Mammary epithelial cell (primary cell): ENCODE measurements at regions of chr3 and their contacts with region 1.

Region 1: GRCh38 chr3:15498431-15499214 is 22.9 kb downstream of the COLQ start:
- DNase-seq: no peak
- H3K4me3 ChIP-seq: no peak overlapping the region
- H3K27ac ChIP-seq: no peak overlapping the region
- H3K4me1 ChIP-seq: no peaks in the 10 kb centered on the region
- H3K27me3 ChIP-seq: no peaks in the 10 kb centered on the region
- CTCF ChIP-seq: no peak

Region 2: GRCh38 chr3:15268033-15268631 is 230.5 kb before region 1 on chr3:
- CTCF ChIA-PET with region 1: no interaction called
- dilution Hi-C with region 1: no loop called
- in situ Hi-C with region 1: no loop called
- intact Hi-C with region 1: no loop called
- DNase-seq: peak; percentile 60
- H3K4me3 ChIP-seq: no peak overlapping the region
- H3K27ac ChIP-seq: no peak overlapping the region
- H3K4me1 ChIP-seq: peaks cover 20% of the 10 kb centered on the region
- H3K27me3 ChIP-seq: no peaks in the 10 kb centered on the region
- CTCF ChIP-seq: peak; percentile 94 to 97

Region 3: GRCh38 chr3:15440891-15441290 is 57.7 kb before region 1 on chr3:
- CTCF ChIA-PET with region 1: no interaction called
- dilution Hi-C with region 1: no loop called
- in situ Hi-C with region 1: no loop called
- intact Hi-C with region 1: no loop called
- DNase-seq: peak; percentile 67
- H3K4me3 ChIP-seq: no peak overlapping the region
- H3K27ac ChIP-seq: peak overlapping the region; percentile 15
- H3K4me1 ChIP-seq: peaks cover 19% of the 10 kb centered on the region
- H3K27me3 ChIP-seq: no peaks in the 10 kb centered on the region
- CTCF ChIP-seq: no peak

Region 4: DNA sequence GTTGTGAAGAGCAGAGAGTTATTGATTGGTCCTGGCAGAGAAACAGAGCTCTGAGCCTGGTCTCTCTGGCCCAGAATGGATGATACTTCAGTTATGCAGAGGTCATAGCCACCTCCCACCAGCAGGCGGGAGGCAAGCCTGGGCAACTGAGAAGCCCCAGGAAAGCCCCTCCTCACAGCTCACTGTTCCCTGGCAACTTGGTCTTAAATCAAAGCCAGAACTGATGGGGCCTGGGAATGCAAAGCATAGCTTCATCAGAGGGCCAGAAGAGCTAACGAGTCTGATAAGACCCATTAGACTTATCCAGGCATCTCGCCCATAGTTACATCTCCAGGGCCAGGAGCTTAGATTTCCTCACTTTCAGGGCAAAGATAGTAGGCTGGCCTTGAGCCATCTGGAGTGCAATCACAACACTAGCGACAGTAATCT is 28.4 kb after region 1 on chr3:
- CTCF ChIA-PET with region 1: no interaction called
- dilution Hi-C with region 1: loop called (anchors 5 kb)
- in situ Hi-C with region 1: no loop called
- intact Hi-C with region 1: no loop called
- DNase-seq: no peak
- H3K4me3 ChIP-seq: no peak overlapping the region
- H3K27ac ChIP-seq: no peak overlapping the region
- H3K4me1 ChIP-seq: no peaks in the 10 kb centered on the region
- H3K27me3 ChIP-seq: no peaks in the 10 kb centered on the region
- CTCF ChIP-seq: no peak

Region 5: DNA sequence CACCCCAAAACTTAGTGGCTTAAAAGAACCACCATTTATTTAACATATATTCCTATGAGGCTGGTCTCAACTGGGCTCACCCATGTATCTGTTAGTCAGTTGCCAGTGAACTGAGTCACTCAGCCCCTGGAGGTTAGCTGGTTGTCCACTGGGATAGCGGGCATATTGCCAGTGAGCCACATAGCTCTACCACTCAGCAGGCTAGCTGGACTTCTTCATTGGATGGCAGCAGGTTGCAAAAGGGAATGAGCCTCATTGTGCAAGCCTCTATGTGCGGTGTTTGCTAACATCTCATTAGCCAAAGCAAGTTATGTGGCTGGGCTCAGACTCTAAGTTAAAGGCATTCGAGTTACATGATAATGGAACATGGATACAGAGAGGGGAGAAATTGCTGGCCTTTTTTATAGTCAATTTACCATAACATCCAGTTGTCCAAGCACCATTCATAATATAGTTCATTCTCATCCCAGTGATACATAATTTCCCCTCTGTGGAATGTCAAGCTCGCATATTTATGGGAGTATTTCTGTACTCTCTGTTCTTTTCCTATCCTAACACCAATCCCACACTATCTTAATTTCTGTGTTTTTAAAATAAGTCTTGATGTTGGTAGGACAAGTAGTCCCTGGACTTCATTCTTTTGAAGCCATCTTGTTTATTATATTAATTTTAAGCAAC is 111.6 kb after region 1 on chr3:
- CTCF ChIA-PET with region 1: no interaction called
- dilution Hi-C with region 1: no loop called
- in situ Hi-C with region 1: no loop called
- intact Hi-C with region 1: no loop called
- DNase-seq: peak; percentile 83
- H3K4me3 ChIP-seq: no peak overlapping the region
- H3K27ac ChIP-seq: no peak overlapping the region
- H3K4me1 ChIP-seq: no peaks in the 10 kb centered on the region
- H3K27me3 ChIP-seq: no peaks in the 10 kb centered on the region
- CTCF ChIP-seq: no peak